ENCODE measurements at regions of chr1 and their contacts with region 1.

Region 1: GRCh38 chr1:226711976-226712741 is 26.9 kb downstream of the ITPKB start:
- DNase-seq: peak; percentile 86
- H3K4me3 ChIP-seq: peak overlapping the region; percentile 62
- H3K27ac ChIP-seq: peak overlapping the region; percentile 99
- H3K4me1 ChIP-seq: peaks cover 92% of the 10 kb centered on the region
- CTCF ChIP-seq: no peak

Region 2: DNA sequence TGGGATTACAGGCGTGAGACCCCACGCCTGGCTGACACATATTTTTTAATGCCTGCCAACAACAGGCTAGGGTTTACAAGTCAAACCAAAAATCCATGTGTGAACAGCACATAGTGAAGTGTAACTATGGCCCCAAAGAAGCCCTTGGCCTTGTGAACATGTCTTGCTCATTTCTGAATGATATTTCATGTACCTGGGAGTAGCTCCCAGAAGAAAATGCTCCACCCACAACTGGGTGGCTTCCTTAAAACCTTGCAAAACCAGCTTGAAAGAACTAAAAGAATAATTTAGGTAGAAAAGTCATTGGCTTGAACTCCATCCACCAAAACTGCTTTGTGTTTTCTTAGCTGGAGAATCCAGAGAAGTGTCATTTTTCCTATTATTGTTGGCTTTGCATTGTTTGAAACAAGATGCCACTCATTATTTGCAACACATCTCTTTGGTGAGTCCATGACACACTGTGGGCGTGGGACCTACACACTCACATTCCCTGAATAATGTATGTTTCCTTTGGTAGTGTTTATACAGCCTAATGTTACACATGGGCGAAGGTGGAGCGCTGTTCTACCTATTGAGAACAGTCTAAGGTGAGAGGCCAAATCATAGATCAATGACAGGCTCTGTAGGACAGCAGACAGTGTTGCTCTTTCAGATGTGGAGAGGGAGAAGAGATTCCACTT is 684.5 kb before region 1 on chr1:
- CTCF ChIA-PET with region 1: no interaction called
- POLR2A ChIA-PET with region 1: no interaction called
- intact Hi-C with region 1: no loop called
- DNase-seq: no peak
- H3K4me3 ChIP-seq: no peak overlapping the region
- H3K27ac ChIP-seq: no peak overlapping the region
- H3K4me1 ChIP-seq: peaks cover 25% of the 10 kb centered on the region
- CTCF ChIP-seq: no peak

Region 3: GRCh38 chr1:226679853-226680516 is 32.2 kb before region 1 on chr1:
- CTCF ChIA-PET with region 1: no interaction called
- POLR2A ChIA-PET with region 1: interaction called, 4 read pairs
- intact Hi-C with region 1: loop called (anchors 1 kb)
- DNase-seq: peak; percentile 84
- H3K4me3 ChIP-seq: peak overlapping the region; percentile 47
- H3K27ac ChIP-seq: peak overlapping the region; percentile 98
- H3K4me1 ChIP-seq: peaks cover 99% of the 10 kb centered on the region
- CTCF ChIP-seq: no peak

Region 4: GRCh38 chr1:226723657-226724532 is 11.7 kb after region 1 on chr1:
- CTCF ChIA-PET with region 1: no interaction called
- POLR2A ChIA-PET with region 1: interaction called, 10 read pairs
- intact Hi-C with region 1: no loop called
- DNase-seq: peak; percentile 72
- H3K4me3 ChIP-seq: peak overlapping the region; percentile 47
- H3K27ac ChIP-seq: peak overlapping the region; percentile 70
- H3K4me1 ChIP-seq: peaks cover 74% of the 10 kb centered on the region
- CTCF ChIP-seq: no peak

Region 5: GRCh38 chr1:226763905-226764264 is 51.7 kb after region 1 on chr1:
- CTCF ChIA-PET with region 1: interaction called, 3 read pairs
- POLR2A ChIA-PET with region 1: interaction called, 3 read pairs
- intact Hi-C with region 1: loop called (anchors 1 kb)
- DNase-seq: peak; percentile 57
- H3K4me3 ChIP-seq: peak overlapping the region; percentile 50
- H3K27ac ChIP-seq: peak overlapping the region; percentile 98
- H3K4me1 ChIP-seq: peaks cover 55% of the 10 kb centered on the region
- CTCF ChIP-seq: no peak